Activated T-helper 1 cell treated with anti-CD3 and anti-CD28 coated beads, Interleukin-12 subunit alpha, Interleukin-12 subunit beta, Interleukin-2, Interleukin-4 antibody, amounts not matched to agents 30 ng/mL and 10 ng/mL and 1 ng/mL, durations not matched to agents 14 hours and 24 hours and 36 hours (primary cell): ENCODE measurements at regions of chr21 and their contacts with region 1.

Region 1: GRCh38 chr21:38733973-38734546 is 71.7 kb upstream of the ETS2 start:
- DNase-seq: peak; percentile 47
- H3K4me3 Mint-ChIP-seq: peak overlapping the region; percentile 87
- H3K27ac Mint-ChIP-seq: no peak overlapping the region
- H3K4me1 Mint-ChIP-seq: peaks cover 16% of the 10 kb centered on the region
- H3K27me3 Mint-ChIP-seq: peaks cover 41% of the 10 kb centered on the region

Region 2: GRCh38 chr21:38505654-38506515 is 228.2 kb before region 1 on chr21:
- intact Hi-C with region 1: loop called (anchors 2 kb)
- DNase-seq: no peak
- H3K4me3 Mint-ChIP-seq: no peak overlapping the region
- H3K27ac Mint-ChIP-seq: peak overlapping the region; percentile 11
- H3K4me1 Mint-ChIP-seq: peaks cover 15% of the 10 kb centered on the region
- H3K27me3 Mint-ChIP-seq: peaks cover 10% of the 10 kb centered on the region

Region 3: GRCh38 chr21:38787461-38788274 is 53.6 kb after region 1 on chr21:
- intact Hi-C with region 1: no loop called
- DNase-seq: no peak
- H3K4me3 Mint-ChIP-seq: no peak overlapping the region
- H3K27ac Mint-ChIP-seq: no peak overlapping the region
- H3K4me1 Mint-ChIP-seq: peaks cover 7% of the 10 kb centered on the region
- H3K27me3 Mint-ChIP-seq: peaks cover 2% of the 10 kb centered on the region

Region 4: DNA sequence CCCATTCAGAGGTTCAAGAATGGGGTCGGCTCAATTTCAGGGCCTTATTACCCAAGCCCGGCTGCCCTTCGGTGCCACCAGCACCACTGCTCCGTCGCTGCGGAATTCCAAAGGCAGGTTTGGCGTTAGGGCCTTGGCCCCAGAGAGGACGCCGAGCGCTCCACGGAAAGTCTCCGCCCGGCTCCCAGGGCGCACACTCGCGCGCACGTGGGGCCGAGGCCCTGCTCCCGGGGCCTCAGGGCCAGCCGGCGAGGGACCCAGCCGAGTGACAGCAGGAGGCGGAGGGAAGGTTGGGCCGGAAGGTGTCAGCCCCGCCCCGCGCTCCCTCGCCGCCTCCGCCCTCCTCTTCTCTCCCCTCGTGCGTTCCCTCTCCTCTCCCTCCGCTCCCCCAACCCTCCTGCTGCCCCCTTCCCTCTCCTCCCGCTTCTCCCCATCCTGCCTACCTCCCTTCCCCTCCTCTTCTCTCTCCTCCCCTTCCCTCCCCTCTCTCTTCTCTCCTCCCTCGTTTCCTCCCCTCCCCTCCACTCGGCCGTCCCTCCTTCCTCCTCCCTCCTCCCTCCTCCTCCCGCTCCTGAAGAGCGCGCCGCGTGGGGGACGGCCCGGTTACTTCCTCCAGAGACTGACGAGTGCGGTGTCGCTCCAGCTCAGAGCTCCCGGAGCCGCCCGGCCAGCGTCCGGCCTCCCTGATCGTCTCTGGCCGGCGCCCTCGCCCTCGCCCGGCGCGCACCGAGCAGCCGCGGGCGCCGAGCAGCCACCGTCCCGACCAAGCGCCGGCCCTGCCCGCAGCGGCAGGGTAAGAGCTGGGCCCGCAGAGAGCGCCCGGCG is 71.5 kb after region 1 on chr21 and contains the start of gene ETS2:
- intact Hi-C with region 1: loop called (anchors 1 kb)
- DNase-seq: peak; percentile 72
- H3K4me3 Mint-ChIP-seq: peak within 1 kb of the TSS; percentile 92
- H3K27ac Mint-ChIP-seq: peak within 1 kb of the TSS; percentile 90
- H3K4me1 Mint-ChIP-seq: peaks cover 27% of the 10 kb centered on the region
- H3K27me3 Mint-ChIP-seq: peaks cover 7% of the 10 kb centered on the region
- total RNA-seq, gene ETS2: 22.9 and 25.8 TPM in 2 replicates

Region 5: GRCh38 chr21:39125752-39126485 is 391.9 kb after region 1 on chr21:
- intact Hi-C with region 1: loop called (anchors 1 kb)
- DNase-seq: no peak
- H3K4me3 Mint-ChIP-seq: no peak overlapping the region
- H3K27ac Mint-ChIP-seq: no peak overlapping the region
- H3K4me1 Mint-ChIP-seq: peaks cover 6% of the 10 kb centered on the region
- H3K27me3 Mint-ChIP-seq: peaks cover 15% of the 10 kb centered on the region

Region 6: DNA sequence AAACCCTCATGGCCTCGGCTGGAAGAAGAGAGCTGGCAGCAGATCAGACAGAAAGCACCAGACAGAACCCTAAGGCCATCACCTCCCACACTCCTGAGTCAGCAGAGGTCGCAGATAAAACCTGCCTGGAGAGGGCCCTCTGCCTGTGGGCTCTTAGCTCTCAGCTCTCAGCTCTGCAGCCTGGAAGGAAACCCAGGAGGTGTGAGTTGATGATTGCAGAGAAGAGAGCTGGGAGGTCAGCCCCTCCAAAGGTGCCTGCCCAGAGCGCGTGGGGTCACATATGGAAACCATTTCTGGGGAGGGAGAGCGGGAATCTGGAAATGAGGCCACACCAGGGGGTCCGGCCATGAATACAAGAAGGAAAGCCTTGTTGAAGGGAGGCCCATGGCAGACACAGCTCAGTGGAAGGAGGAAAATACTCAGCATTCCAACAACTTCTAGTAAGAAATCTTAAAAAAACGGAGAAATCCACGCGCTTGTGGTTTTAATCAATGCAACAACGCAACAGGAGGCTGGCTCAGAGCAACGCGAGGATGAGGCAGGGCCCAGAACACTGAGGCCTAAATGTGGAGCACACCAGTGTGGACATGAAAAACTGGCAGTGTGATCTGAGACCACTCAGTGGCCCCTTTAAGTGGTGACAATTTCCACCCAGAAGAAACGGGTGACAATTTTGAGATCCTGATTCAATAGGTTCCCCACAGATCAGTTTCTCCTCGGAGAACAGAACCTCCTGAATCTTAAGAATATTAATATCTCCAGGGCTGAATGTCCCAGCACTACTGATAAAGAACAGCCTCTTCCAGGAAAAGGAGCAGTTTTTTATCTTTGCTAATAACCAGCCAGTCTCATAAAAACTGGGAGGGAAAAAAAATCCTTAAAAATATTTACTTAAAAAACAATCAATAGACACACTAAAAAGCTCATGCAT is 403.5 kb after region 1 on chr21:
- intact Hi-C with region 1: loop called (anchors 1 kb)
- DNase-seq: no peak
- H3K4me3 Mint-ChIP-seq: no peak overlapping the region
- H3K27ac Mint-ChIP-seq: no peak overlapping the region
- H3K4me1 Mint-ChIP-seq: no peaks in the 10 kb centered on the region
- H3K27me3 Mint-ChIP-seq: peaks cover 2% of the 10 kb centered on the region

Region 7: GRCh38 chr21:39175154-39175553 is 441.1 kb after region 1 on chr21:
- intact Hi-C with region 1: loop called (anchors 1 kb)
- DNase-seq: no peak
- H3K4me3 Mint-ChIP-seq: no peak overlapping the region
- H3K27ac Mint-ChIP-seq: no peak overlapping the region
- H3K4me1 Mint-ChIP-seq: peaks cover 12% of the 10 kb centered on the region
- H3K27me3 Mint-ChIP-seq: no peaks in the 10 kb centered on the region

Region 8: GRCh38 chr21:39388038-39388810 is 654.2 kb after region 1 on chr21:
- intact Hi-C with region 1: loop called (anchors 5 kb)
- DNase-seq: peak; percentile 80
- H3K4me3 Mint-ChIP-seq: peak overlapping the region; percentile 86
- H3K27ac Mint-ChIP-seq: peak overlapping the region; percentile 87
- H3K4me1 Mint-ChIP-seq: peaks cover 19% of the 10 kb centered on the region
- H3K27me3 Mint-ChIP-seq: no peaks in the 10 kb centered on the region